Vagina (tissue), 2 donors: ENCODE measurements at regions of chr15 and their contacts with region 1.

Region 1: GRCh38 chr15:39657714-39658113 is 76.8 kb downstream of the THBS1 start:
- DNase-seq: no peak
- H3K4me3 ChIP-seq: no peak overlapping the region
- H3K27ac ChIP-seq: no peak overlapping the region
- H3K4me1 ChIP-seq: no peaks in the 10 kb centered on the region
- H3K27me3 ChIP-seq: no peaks in the 10 kb centered on the region
- CTCF ChIP-seq: no peak
- POLR2A ChIP-seq: no peak

Region 2: DNA sequence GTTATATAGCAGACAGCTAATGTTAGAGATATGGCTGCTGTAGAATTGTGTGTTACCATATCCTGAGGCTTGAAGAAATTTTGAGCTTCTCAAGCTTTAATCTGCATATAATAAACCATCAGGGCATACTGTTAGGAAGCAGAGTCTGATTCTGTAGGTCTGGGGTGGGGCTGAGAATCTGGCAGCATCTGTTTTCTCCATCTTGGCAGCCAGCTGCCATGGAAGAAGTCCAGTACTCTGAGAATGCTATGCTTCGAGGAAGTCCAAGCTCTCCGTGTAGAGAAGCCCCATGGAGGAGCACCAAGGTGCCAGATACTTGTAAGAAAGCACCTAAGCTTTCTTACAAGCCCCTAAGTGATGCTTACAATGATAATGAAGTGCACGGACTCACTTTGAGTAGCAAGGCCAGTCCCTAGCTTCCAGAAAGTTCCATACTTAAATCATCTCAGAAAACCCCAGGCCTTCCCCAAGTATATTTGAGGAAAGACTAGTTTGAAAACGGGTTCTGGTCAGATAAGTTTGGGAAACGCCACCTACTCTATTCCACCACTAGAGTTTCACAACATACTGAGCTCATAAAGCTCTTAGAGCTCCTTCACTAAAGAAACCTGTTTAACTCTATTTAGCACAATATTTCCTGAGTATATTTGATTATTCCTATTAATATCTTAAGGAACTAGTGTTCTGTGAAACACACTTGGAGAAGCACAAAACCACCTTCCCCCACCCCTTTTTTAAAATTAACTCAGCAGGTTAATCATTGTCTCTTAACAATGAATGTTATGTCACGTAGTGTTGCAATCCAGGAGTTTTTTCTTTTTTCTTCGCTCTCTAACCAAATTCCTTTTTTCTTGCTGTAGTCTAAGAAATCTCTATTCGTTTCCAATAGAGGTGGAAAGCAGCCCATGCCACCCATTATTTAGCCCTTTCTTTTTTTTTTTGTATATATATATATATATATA is 1033.2 kb before region 1 on chr15:
- intact Hi-C with region 1: no loop called
- DNase-seq: no peak
- H3K4me3 ChIP-seq: no peak overlapping the region
- H3K27ac ChIP-seq: no peak overlapping the region
- H3K4me1 ChIP-seq: no peaks in the 10 kb centered on the region
- H3K27me3 ChIP-seq: no peaks in the 10 kb centered on the region
- CTCF ChIP-seq: no peak
- POLR2A ChIP-seq: no peak

Region 3: GRCh38 chr15:38809621-38810020 is 848.1 kb before region 1 on chr15:
- intact Hi-C with region 1: loop called (anchors 5 kb)
- DNase-seq: no peak
- H3K4me3 ChIP-seq: no peak overlapping the region
- H3K27ac ChIP-seq: no peak overlapping the region
- H3K4me1 ChIP-seq: no peaks in the 10 kb centered on the region
- H3K27me3 ChIP-seq: no peaks in the 10 kb centered on the region
- CTCF ChIP-seq: no peak
- POLR2A ChIP-seq: no peak

Region 4: GRCh38 chr15:39583596-39584265 is 74.0 kb before region 1 on chr15:
- intact Hi-C with region 1: no loop called
- DNase-seq: no peak
- H3K4me3 ChIP-seq: peak overlapping the region; percentile 53 to 80
- H3K27ac ChIP-seq: no peak overlapping the region
- H3K4me1 ChIP-seq: peaks cover 69% of the 10 kb centered on the region
- H3K27me3 ChIP-seq: no peaks in the 10 kb centered on the region
- CTCF ChIP-seq: no peak
- POLR2A ChIP-seq: no peak